Heart left ventricle (tissue), 16 donors: ENCODE measurements at regions of chr12 and their contacts with region 1.

Region 1: DNA sequence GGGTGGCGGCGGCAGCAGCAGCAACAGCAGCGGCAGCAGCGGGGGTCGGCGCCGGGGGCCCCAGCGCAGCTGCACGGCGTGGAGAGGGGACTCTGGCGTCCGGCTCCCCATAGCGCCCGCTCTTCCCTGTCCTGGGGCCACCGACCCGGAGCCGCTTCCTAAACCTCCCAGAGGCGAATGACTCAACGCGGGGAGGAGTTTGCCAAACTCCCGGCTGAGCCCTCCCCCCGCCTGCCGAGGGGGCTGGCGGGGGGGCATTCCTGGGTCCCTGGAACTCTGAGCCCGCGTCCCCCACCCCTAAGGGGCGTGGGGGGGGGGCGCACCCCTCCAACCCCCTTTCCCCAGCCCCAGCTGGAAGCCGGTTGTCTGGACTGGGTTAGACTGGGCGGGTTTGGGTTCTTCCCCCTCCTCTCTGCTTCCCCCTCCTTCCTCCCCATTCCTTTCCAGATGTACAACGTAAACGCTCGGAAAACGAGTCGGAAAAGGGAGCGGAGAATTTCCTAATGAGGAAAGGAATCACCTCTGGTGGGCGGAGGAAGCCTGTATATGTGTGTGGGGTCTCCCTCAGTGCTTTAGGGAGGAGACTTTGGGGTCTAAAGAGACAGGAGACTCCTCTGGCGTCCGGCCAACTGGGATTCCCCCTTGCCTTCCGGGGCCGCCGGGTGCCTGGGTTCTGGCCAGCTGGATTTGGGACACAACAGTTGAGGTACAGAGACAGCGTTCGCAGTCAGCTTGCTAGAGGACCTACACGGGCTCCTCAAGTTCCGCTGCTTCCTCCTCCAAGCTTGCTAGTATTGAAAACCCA is at the start of gene ITGA5:
- DNase-seq: peak; percentile 86 to 90 (median 88)
- ATAC-seq: peak; percentile 46 to 81 (median 78)
- H3K4me3 ChIP-seq: peak within 1 kb of the TSS; percentile 67 to 97 (median 88)
- H3K27ac ChIP-seq: peak within 1 kb of the TSS; percentile 85 to 99 (median 96)
- H3K4me1 ChIP-seq: peaks cover 4 to 77% (median 54%) of the 10 kb centered on the region in 12 donors
- H3K27me3 ChIP-seq: no peaks in the 10 kb centered on the region
- CTCF ChIP-seq: no peak
- POLR2A ChIP-seq: peak in 1 of 2 donors; percentile 95
- total RNA-seq, gene ITGA5: 41.6 to 128 (median 55.0) TPM

Region 2: GRCh38 chr12:54398995-54399793 is 20.1 kb before region 1 on chr12:
- intact Hi-C with region 1: loop called in 1 of 10 experiments (anchors 2 kb)
- DNase-seq: peak; percentile 82 to 92 (median 85)
- ATAC-seq: peak; percentile 76 to 86 (median 84)
- H3K4me3 ChIP-seq: no peak overlapping the region
- H3K27ac ChIP-seq: peak overlapping the region in 1 of 12 donors; percentile 73
- H3K4me1 ChIP-seq: peaks cover 0 to 20% (median 3%) of the 10 kb centered on the region in 12 donors
- H3K27me3 ChIP-seq: no peaks in the 10 kb centered on the region
- CTCF ChIP-seq: peak; percentile 97 to 99 (median 99)
- POLR2A ChIP-seq: no peak

Region 3: DNA sequence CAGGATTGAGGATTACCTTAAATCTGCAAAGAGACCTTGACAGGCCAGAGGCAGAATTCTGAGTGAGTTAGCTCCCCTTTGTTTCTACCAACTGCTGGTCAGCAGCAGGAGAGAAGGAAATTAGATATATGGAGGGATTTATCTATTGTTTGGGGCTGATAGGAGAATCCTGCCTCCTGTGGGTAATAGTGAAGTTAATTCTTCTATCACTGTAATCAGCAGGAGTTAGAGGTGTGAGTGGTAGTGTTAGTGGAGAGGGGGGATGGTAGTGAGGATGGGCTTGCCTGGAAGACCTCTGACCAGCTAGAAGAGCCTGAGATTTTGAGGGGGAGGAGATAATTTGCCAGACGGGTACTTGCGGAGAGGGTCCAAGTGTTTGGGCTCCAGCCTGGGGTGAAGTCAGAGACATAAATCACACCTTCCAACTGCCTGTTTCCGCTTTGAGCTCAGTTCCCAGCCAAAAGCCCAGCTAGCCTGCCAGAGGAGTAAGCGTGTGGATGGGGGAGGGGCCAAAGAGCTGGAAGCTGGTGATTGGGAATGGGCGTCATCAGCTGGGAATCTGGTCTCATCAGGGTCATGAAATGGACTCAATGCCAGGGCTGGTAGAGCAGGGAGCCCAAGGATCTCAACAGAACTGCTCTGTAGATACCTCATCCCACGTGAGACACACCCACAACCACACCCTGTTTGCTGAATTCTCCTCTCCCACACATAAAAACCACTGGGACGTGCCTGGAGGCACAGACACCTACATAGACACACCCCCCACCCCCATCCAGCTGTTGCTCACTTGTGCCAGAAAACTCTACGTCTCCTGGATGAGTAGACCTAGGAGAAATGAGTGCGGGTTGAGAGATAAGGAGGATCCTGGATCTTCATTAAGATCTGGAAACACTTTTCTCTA is 12.9 kb after region 1 on chr12:
- intact Hi-C with region 1: loop called in 3 of 10 experiments (anchors 2 kb)
- DNase-seq: peak; percentile 78 to 90 (median 85)
- ATAC-seq: peak; percentile 64 to 86 (median 81)
- H3K4me3 ChIP-seq: peak overlapping the region in 2 of 12 donors; percentile 3 to 21
- H3K27ac ChIP-seq: peak overlapping the region; percentile 7 to 97 (median 74)
- H3K4me1 ChIP-seq: peaks cover 23 to 63% (median 46%) of the 10 kb centered on the region in 12 donors
- H3K27me3 ChIP-seq: no peaks in the 10 kb centered on the region
- CTCF ChIP-seq: peak in 1 of 12 donors; percentile 2
- POLR2A ChIP-seq: no peak